Activated CD8-positive, alpha-beta T cell treated with anti-CD3 and anti-CD28 coated beads for 36 hours (primary cell): ENCODE measurements at regions of chr3 and their contacts with region 1.

Region 1: DNA sequence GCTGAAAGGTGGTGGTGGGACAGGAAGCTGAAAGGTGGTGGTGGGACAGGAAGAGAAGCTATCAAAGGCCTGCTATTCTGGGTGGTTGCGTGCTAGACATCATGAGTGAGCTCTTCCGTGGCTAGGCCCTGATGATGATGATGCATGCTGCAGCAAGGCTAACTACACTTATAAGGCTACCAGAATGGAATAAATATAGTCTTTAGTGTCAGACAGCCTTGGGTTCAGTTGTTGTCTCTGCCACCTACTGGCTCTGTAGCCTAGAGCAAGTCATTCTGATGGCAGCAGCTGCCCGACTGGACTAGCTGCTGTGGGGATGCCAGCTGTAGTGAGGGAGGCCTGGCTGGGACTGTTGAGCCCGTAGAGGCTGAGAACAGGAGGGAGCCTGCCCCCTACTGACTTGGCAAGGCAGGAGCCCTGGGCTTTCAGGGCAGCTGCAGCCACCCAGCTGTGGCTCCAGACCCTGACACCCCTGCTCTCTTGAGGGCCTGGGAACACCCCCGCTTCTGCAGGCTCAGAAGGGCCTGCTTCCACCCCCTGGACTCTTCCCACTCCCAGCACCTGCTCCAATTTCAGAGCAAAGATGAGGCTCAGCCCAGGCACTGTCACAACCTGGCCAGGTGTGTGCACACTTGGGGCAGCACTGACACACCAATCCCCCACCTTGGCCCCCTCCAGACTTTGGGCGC is 21.4 kb upstream of the ZBED2 start:
- DNase-seq: peak; percentile 82
- ATAC-seq: peak; percentile 83
- H3K4me3 Mint-ChIP-seq: peak overlapping the region; percentile 30
- H3K27ac Mint-ChIP-seq: peak overlapping the region; percentile 93
- H3K4me1 Mint-ChIP-seq: peaks cover 80% of the 10 kb centered on the region
- H3K27me3 Mint-ChIP-seq: no peaks in the 10 kb centered on the region
- CTCF ChIP-seq: peak; percentile 62

Region 2: DNA sequence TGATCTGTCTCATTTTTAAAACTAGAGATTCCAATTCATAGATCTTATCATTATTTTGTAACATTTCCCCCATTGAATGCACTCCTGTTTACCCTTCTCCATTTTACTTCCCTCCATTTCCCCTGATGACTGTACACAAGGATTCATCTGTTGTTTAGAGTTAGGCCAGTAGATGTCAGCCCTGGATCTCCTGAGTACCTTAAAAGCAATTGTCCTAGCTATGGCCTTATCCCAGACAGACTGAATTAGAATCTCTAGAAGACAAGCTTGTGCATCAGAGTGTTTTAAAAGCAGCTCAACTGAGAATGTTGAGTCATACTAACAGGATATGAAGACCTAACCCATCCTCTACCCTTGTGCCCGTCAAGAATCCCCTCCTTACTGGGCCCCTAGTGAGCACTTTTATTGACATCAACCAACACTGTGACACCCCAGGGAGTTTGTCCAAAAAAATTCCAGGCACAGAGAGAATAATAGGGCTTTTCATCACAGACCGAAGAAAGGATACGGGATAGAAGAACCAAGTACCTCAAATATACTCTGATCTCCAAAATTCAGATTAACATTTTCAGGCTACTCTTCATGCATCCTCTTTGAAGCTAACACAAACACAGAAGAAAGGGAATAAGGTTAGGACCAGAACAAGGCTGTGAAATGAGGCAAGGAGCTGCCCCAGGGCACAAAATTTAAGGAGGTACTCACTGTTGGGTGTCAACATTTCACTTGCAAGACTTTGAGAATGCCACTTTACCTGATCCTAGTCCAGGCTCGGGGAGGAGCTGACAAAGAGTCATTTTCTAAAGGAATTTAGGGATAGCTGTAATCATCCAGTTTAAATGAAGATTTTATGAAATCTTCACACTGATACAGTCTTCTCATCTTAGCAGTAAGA is 38.5 kb before region 1 on chr3:
- CTCF ChIA-PET with region 1: interaction called, 63 read pairs
- POLR2A ChIA-PET with region 1: interaction called, 6 read pairs
- intact Hi-C with region 1: loop called (anchors 5 kb)
- DNase-seq: no peak
- ATAC-seq: peak; percentile 88
- H3K4me3 Mint-ChIP-seq: no peak overlapping the region
- H3K27ac Mint-ChIP-seq: peak overlapping the region; percentile 73
- H3K4me1 Mint-ChIP-seq: peaks cover 80% of the 10 kb centered on the region
- H3K27me3 Mint-ChIP-seq: no peaks in the 10 kb centered on the region
- CTCF ChIP-seq: peak; percentile 64

Region 3: GRCh38 chr3:111594205-111594604 is 22.4 kb before region 1 on chr3:
- CTCF ChIA-PET with region 1: interaction called, 30 read pairs
- POLR2A ChIA-PET with region 1: interaction called, 13 read pairs
- intact Hi-C with region 1: no loop called
- DNase-seq: no peak
- ATAC-seq: peak; percentile 12
- H3K4me3 Mint-ChIP-seq: peak overlapping the region; percentile 97
- H3K27ac Mint-ChIP-seq: peak overlapping the region; percentile 97
- H3K4me1 Mint-ChIP-seq: peaks cover 64% of the 10 kb centered on the region
- H3K27me3 Mint-ChIP-seq: no peaks in the 10 kb centered on the region
- CTCF ChIP-seq: no peak

Region 4: GRCh38 chr3:111604119-111604518 is 12.4 kb before region 1 on chr3:
- CTCF ChIA-PET with region 1: interaction called, 30 read pairs
- POLR2A ChIA-PET with region 1: interaction called, 10 read pairs
- intact Hi-C with region 1: no loop called
- DNase-seq: peak; percentile 60
- ATAC-seq: peak; percentile 54
- H3K4me3 Mint-ChIP-seq: peak overlapping the region; percentile 12
- H3K27ac Mint-ChIP-seq: peak overlapping the region; percentile 93
- H3K4me1 Mint-ChIP-seq: peaks cover 84% of the 10 kb centered on the region
- H3K27me3 Mint-ChIP-seq: no peaks in the 10 kb centered on the region
- CTCF ChIP-seq: no peak